ENCODE measurements at regions of chr19 and their contacts with region 1.

Region 1: DNA sequence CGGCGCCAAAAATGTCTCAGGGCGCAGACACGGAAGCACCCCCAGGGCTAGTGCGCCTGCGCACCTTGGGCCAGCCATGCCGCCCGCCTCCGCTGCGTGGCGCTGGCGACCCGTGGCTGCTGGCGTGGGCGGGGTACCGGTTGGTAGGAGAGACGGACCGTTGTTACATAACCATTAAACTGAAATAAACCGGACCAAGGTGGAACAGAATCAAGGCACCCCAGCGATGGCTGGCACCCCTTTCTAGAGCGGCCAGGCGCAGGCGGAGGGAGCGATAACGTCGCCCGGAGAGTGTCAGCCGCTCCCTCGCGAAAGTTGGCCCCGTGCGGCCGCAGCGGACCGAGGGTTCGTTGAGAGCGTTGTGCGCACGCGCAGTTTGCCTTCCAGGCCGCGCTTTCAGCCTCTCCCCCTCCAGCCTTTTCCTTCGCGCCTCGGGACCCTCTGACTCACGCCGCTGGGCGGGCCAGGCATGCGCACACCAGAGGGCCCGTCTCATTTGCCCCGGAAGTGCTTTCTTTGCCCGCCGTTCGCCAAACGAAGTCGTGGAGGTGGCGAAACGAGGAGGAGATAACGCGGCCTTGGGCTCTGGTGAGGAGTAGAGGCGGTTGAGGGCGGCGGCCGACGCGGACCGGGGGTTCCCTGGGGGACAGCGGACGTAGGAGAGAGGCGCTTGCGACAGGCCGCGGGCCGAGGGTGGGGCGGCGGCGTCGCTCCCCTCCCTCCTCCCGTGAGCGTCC is at the starts of genes PLEKHJ1 and SF3A2:
- DNase-seq: peak; percentile 96 to 100 (median 98)
- ATAC-seq: peak; percentile 81
- H3K4me3 ChIP-seq: peak within 1 kb of the TSS; percentile 75 to 83
- H3K4me3 Mint-ChIP-seq: peak within 1 kb of the TSS; percentile 97
- H3K27ac ChIP-seq: peak within 1 kb of the TSS; percentile 99
- H3K27ac Mint-ChIP-seq: peak within 1 kb of the TSS; percentile 99
- H3K4me1 ChIP-seq: peaks cover 58% of the 10 kb centered on the region
- H3K4me1 Mint-ChIP-seq: peaks cover 57% of the 10 kb centered on the region
- H3K27me3 ChIP-seq: no peaks in the 10 kb centered on the region
- H3K27me3 Mint-ChIP-seq: no peaks in the 10 kb centered on the region
- CTCF ChIP-seq: peak; percentile 99
- total RNA-seq, gene PLEKHJ1: 25.9 to 26.1 TPM
- total RNA-seq, gene SF3A2: 164 to 167 TPM

Region 2: DNA sequence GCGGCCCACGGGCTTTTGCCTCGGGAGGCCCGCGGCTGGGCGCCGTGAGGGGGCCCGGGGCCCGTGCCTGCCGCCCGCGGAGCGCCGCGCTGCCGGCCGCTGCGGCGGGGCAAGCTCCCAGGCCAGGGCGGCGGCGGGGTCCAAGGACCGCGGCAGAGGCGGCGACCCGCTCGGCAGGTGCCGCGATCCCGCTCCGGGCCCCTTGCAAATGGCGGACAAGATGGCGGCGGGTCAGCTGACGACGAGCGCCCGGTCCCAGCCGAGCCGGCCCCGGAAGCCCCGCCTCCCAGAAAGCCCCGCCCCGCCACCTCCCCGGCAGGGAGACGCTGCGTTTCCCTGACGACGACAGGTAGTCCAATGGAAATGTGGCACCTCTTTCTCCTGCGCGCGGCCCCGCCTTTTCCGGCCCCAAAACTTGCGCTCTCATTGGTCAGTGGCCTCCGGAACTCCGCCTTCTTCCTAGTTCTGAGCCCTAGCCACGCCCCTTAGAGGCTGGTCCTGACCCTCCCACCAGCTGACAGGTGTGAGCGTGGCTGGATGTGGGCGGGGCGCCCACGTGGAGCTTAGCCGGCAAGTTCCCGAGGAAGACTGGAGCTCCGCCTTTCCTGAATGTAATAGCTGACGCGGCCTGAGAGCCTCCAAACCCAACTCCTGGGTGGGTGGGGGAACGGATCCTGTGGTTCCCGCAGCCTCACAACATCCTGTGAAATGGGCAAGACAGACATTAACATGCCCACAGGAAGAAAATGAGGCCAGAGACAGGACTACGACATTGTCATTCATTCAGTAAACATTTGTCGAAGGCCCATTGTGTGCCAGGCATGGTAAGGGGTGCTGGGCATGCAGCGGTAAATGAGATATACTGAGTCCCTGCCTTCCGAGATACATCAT is 84.9 kb before region 1 on chr19 and contains the start of gene AP3D1:
- CTCF ChIA-PET with region 1: interaction called, 6 read pairs
- POLR2A ChIA-PET with region 1: interaction called, 4 read pairs
- intact Hi-C with region 1: loop called (anchors 1 kb)
- DNase-seq: peak; percentile 100
- ATAC-seq: peak; percentile 91
- H3K4me3 ChIP-seq: peak within 1 kb of the TSS; percentile 60 to 87
- H3K4me3 Mint-ChIP-seq: peak within 1 kb of the TSS; percentile 85
- H3K27ac ChIP-seq: peak within 1 kb of the TSS; percentile 78 to 79
- H3K27ac Mint-ChIP-seq: peak within 1 kb of the TSS; percentile 90
- H3K4me1 ChIP-seq: peaks cover 36% of the 10 kb centered on the region
- H3K4me1 Mint-ChIP-seq: peaks cover 35% of the 10 kb centered on the region
- H3K27me3 ChIP-seq: no peaks in the 10 kb centered on the region
- H3K27me3 Mint-ChIP-seq: no peaks in the 10 kb centered on the region
- CTCF ChIP-seq: no peak
- total RNA-seq, gene AP3D1: 39.4 to 42.5 TPM

Region 3: DNA sequence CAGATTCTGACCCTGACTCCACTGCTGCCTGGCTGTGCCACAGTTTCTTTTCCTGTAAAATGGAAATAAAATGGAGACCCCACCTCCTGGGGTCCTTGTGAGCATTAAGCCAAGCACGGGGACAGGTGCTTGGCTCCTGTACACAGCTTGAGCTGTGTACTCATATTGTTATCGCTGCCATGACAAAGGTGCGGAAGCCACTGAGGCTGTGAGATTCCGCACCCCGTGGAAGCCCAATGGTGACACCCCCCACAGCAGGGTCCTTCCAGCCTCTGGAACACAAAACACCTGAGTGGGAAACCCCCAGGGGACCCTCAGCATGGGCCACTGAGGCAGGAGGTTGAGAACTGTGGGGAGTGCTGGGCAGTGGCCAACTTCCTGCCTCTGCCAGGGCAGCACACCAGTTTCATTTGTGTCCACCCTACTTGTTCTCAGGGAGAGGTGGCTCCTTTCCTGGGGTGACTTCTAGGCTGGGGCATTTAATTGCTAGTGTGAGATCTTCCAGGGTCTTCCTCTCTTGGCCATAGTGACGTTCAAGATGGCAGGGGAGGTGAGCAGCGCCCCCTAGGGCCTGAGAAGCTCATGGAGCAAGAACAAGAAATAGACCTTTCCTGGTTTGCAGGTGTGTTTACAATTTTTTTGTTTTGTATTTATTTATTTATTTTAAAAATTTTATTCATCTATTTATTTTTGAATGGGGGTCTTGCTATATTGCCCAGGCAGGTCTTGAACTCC is 25.1 kb after region 1 on chr19:
- CTCF ChIA-PET with region 1: interaction called, 39 read pairs
- POLR2A ChIA-PET with region 1: interaction called, 22 read pairs
- intact Hi-C with region 1: loop called (anchors 1 kb)
- DNase-seq: peak in 7 of 9 experiments; percentile 47 to 77 (median 66)
- ATAC-seq: no peak
- H3K4me3 ChIP-seq: no peak overlapping the region
- H3K4me3 Mint-ChIP-seq: no peak overlapping the region
- H3K27ac ChIP-seq: no peak overlapping the region
- H3K27ac Mint-ChIP-seq: no peak overlapping the region
- H3K4me1 ChIP-seq: peaks cover 25% of the 10 kb centered on the region
- H3K4me1 Mint-ChIP-seq: peaks cover 27% of the 10 kb centered on the region
- H3K27me3 ChIP-seq: no peaks in the 10 kb centered on the region
- H3K27me3 Mint-ChIP-seq: no peaks in the 10 kb centered on the region
- CTCF ChIP-seq: peak; percentile 58

Region 4: GRCh38 chr19:2371656-2372055 is 135.2 kb after region 1 on chr19:
- CTCF ChIA-PET with region 1: no interaction called
- POLR2A ChIA-PET with region 1: no interaction called
- intact Hi-C with region 1: no loop called
- DNase-seq: no peak
- ATAC-seq: no peak
- H3K4me3 ChIP-seq: no peak overlapping the region
- H3K4me3 Mint-ChIP-seq: no peak overlapping the region
- H3K27ac ChIP-seq: no peak overlapping the region
- H3K27ac Mint-ChIP-seq: no peak overlapping the region
- H3K4me1 ChIP-seq: no peaks in the 10 kb centered on the region
- H3K4me1 Mint-ChIP-seq: no peaks in the 10 kb centered on the region
- H3K27me3 ChIP-seq: no peaks in the 10 kb centered on the region
- H3K27me3 Mint-ChIP-seq: peaks cover 2% of the 10 kb centered on the region
- CTCF ChIP-seq: no peak

Region 5: DNA sequence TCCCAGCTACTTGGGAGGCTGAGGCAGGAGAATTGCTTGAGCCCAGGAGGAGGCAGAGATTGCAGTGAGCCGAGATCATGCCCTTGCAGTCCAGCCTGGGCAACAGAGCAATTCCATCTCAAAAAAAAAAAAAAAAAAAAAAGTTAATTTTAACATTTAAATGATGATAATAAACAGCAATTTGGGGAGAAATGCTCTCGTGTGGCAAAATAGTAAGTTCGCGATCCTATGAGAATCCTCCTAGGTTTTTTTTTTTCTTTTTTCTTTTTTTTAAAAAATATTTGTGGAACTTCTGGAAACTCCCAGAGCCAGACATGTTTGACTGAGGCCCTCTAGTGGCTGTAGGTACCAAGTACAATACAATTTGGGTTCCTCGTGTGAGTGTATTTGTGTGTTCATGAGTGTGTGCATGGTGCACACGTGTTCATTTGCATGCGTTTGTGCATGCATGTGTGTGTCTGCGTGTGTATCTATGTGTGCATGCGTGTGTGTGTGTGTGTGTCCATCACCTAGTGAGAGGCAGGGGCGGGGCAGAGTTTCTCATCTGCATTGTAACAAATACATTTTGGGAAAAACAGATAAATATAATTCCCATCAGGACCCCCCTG is 154.7 kb after region 1 on chr19:
- CTCF ChIA-PET with region 1: interaction called, 7 read pairs
- POLR2A ChIA-PET with region 1: interaction called, 8 read pairs
- intact Hi-C with region 1: loop called (anchors 1 kb)
- DNase-seq: peak in 7 of 9 experiments; percentile 10 to 83 (median 42)
- ATAC-seq: peak; percentile 57
- H3K4me3 ChIP-seq: no peak overlapping the region
- H3K4me3 Mint-ChIP-seq: no peak overlapping the region
- H3K27ac ChIP-seq: no peak overlapping the region
- H3K27ac Mint-ChIP-seq: no peak overlapping the region
- H3K4me1 ChIP-seq: no peaks in the 10 kb centered on the region
- H3K4me1 Mint-ChIP-seq: peaks cover 12% of the 10 kb centered on the region
- H3K27me3 ChIP-seq: no peaks in the 10 kb centered on the region
- H3K27me3 Mint-ChIP-seq: peaks cover 2% of the 10 kb centered on the region
- CTCF ChIP-seq: peak; percentile 77

Region 6: DNA sequence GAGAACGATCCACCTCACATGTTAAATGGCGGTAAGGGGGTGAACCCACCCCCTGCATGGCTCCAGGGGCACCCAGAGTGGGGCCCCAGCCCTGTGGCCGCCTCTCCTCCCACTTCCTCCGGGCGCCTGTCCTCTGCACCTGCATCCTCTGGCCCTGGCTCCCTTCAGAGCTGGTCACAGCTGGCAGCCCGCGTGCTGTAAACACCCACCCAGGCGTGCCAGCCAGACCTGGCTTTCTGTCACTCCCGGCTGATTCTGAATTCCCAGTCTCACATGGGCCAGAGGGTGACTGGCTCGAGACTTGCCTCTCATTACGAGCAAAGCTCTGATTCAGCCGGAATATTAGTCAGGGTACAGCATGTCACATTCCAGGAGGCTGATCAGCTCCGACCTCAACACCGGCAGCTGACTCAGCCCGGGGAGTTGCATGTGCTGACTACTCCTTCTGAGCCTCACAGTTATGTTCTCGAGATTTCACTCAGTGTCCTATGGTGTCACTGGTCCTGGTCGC is 390.9 kb after region 1 on chr19:
- CTCF ChIA-PET with region 1: no interaction called
- POLR2A ChIA-PET with region 1: no interaction called
- intact Hi-C with region 1: loop called (anchors 5 kb)
- DNase-seq: peak in 2 of 9 experiments; percentile 28 to 45
- ATAC-seq: peak; percentile 35
- H3K4me3 ChIP-seq: no peak overlapping the region
- H3K4me3 Mint-ChIP-seq: no peak overlapping the region
- H3K27ac ChIP-seq: no peak overlapping the region
- H3K27ac Mint-ChIP-seq: peak overlapping the region; percentile 55
- H3K4me1 ChIP-seq: peaks cover 28% of the 10 kb centered on the region
- H3K4me1 Mint-ChIP-seq: peaks cover 46% of the 10 kb centered on the region
- H3K27me3 ChIP-seq: no peaks in the 10 kb centered on the region
- H3K27me3 Mint-ChIP-seq: no peaks in the 10 kb centered on the region
- CTCF ChIP-seq: no peak

Region 7: DNA sequence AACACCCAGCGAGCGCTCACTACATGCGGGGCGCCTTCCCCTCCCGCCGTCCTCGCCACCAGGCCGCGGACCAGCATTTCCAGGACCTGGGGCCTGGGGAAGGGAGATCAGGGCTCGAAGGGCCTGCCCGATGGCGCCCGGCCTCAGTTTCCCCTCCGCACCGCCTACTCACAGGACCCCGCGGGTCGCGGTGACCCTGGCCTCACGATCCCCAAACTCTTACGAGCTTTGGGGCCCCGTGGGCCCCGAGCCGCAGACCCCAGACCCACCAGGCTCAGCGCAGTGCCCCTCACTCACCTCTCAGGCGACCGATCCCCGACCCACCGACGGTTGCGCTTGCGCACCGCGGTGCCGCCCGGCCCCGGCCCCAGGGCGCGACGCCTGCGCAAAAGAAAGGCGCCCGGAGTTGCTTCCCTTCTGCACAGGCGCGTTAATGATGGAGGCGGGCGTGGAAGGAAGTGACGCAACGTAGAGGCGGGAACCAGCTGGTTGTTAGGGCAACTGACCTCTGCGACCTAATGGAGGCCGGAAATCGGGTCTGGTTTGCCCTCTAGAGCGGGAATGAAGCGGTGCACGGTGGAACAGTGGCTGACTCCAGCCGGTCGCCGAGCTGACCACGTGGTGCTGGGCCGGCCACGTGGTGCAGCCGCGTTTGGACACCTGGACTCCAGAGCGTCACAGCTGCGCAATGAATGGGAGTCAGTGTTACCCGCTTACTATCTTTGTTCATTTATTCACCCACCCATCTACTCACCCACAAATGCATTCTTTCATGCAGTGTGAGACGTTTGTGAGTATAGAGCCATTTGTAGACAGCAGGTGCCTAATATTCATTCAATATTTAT is 546.7 kb after region 1 on chr19 and contains the start of gene SGTA:
- CTCF ChIA-PET with region 1: no interaction called
- POLR2A ChIA-PET with region 1: no interaction called
- intact Hi-C with region 1: loop called (anchors 1 to 2 kb)
- DNase-seq: peak; percentile 91 to 99 (median 96)
- ATAC-seq: peak; percentile 62
- H3K4me3 ChIP-seq: peak within 1 kb of the TSS; percentile 94 to 98
- H3K4me3 Mint-ChIP-seq: peak within 1 kb of the TSS; percentile 86
- H3K27ac ChIP-seq: peak within 1 kb of the TSS; percentile 89 to 94
- H3K27ac Mint-ChIP-seq: peak within 1 kb of the TSS; percentile 92
- H3K4me1 ChIP-seq: peaks cover 41% of the 10 kb centered on the region
- H3K4me1 Mint-ChIP-seq: peaks cover 52% of the 10 kb centered on the region
- H3K27me3 ChIP-seq: no peaks in the 10 kb centered on the region
- H3K27me3 Mint-ChIP-seq: no peaks in the 10 kb centered on the region
- CTCF ChIP-seq: no peak
- total RNA-seq, gene SGTA: 38.2 to 38.9 TPM

Measured in CD8-positive, alpha-beta T cell (primary cell).